HepG2 (cell line): ENCODE measurements at regions of chr16 and their contacts with region 1.

Region 1: DNA sequence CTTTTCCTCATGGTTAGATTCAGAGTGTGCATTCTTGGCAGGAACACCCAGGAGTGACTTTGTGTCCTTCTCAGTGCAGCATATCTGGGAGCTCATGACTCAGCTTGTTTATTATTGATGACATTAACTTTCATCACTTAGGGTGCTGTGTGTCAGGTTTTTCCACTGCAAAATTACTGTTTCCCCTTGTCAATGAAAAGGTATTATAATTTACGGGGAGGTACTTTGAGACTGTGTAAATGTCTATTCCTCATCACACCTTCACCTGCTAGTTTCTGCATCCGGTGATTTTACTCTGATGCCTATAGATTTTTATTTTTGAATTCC is 50.5 kb downstream of the WWP2 start:
- DNase-seq: no peak
- ATAC-seq: peak; percentile 45; the same call in 2 of the 3 replicates
- H3K4me3 ChIP-seq: no peak overlapping the region
- H3K27ac ChIP-seq: peak overlapping the region; percentile 48
- H3K4me1 ChIP-seq: peaks cover 60% of the 10 kb centered on the region
- H3K27me3 ChIP-seq: no peaks in the 10 kb centered on the region
- CTCF ChIP-seq: no peak
- EP300 ChIP-seq: no peak; a peak in 1 of 4 replicates
- POLR2A ChIP-seq: no peak
- RAD21 ChIP-seq: no peak

Region 2: DNA sequence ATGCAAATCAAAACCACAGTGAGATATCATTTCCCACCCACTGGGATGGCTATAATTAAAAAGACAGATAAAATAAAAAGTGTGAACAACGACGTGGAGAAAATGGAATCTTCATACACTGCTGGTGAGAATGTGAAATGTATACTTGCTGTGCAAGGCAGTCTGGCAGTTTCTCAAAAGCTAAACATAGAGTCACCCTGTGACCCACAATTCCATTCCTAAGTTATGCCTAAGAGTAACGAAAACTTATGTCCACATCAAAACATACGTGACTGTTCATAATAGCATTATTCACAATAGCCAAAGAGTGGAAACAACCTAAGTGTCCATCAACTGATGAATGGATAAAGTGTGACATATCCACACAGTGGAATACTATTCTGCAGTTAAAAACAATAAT is 539.6 kb before region 1 on chr16:
- CTCF ChIA-PET with region 1: no interaction called
- POLR2A ChIA-PET with region 1: no interaction called
- in situ Hi-C with region 1: no loop called
- intact Hi-C with region 1: no loop called
- DNase-seq: no peak
- ATAC-seq: no peak
- H3K4me3 ChIP-seq: no peak overlapping the region
- H3K27ac ChIP-seq: no peak overlapping the region
- H3K4me1 ChIP-seq: no peaks in the 10 kb centered on the region
- H3K27me3 ChIP-seq: no peaks in the 10 kb centered on the region
- CTCF ChIP-seq: no peak
- EP300 ChIP-seq: no peak
- POLR2A ChIP-seq: no peak
- RAD21 ChIP-seq: no peak

Region 3: DNA sequence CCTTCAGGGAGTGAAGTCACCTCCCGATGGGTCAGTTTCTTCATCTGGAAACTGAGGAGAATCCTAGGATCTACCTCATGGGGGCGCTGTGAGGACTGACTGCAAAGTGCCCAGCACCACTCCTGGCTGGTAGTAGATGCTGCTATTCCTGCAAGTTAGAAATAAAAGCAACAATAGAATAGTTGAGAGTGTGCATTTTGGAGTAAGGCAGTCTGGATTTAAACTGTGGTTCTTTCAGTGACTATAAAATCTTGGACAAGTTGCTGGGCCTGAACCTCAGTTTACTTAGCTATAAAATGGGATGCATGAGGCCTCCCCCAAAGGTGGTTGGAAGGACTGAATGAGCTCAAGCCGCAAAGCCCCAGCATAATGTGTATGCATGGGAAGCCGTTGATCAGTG is 317.7 kb before region 1 on chr16:
- CTCF ChIA-PET with region 1: no interaction called
- POLR2A ChIA-PET with region 1: no interaction called
- in situ Hi-C with region 1: no loop called
- intact Hi-C with region 1: no loop called
- DNase-seq: peak; percentile 39
- ATAC-seq: peak; percentile 42
- H3K4me3 ChIP-seq: no peak overlapping the region
- H3K27ac ChIP-seq: no peak overlapping the region
- H3K4me1 ChIP-seq: peaks cover 67% of the 10 kb centered on the region
- H3K27me3 ChIP-seq: no peaks in the 10 kb centered on the region
- CTCF ChIP-seq: peak; percentile 53
- EP300 ChIP-seq: no peak
- POLR2A ChIP-seq: no peak
- RAD21 ChIP-seq: peak; percentile 54

Region 4: DNA sequence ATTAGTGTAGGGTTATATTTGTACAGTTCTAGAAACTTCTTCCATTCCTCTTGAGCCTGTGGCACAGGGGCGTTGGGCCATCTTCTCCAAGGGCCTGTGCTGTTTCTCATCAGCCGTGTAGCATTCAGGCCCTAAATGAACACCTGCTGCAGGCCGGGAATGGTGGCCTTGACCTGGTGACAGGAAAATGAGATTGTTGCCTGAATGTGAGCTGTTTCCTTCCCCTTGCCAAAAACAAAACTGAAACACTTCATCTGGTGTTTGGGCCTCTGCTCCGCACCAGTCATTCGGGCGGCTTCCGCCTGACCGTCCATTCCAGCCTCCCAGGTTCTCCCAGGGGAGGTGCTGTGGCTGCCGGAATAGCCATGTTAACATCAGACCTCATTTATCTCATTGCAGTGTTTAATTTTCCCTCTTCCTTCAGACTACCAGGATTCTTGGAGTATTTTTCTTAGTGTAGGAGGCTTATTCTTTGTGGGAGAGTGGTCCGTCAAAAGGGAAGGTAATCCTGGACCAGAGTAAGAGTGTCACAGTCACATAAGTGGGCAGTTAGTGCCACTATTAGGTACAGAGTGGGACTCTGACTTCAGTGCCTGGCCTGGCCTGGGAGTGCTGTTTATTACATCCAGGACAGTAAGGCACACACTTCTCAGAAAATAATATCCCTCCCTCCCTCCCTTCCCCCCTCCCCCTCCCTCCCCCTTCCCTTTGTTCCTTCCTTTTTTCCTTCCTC is 11.3 kb after region 1 on chr16:
- CTCF ChIA-PET with region 1: no interaction called
- POLR2A ChIA-PET with region 1: interaction called, 16 read pairs
- in situ Hi-C with region 1: no loop called
- intact Hi-C with region 1: no loop called
- DNase-seq: no peak
- ATAC-seq: peak; percentile 47
- H3K4me3 ChIP-seq: no peak overlapping the region
- H3K27ac ChIP-seq: peak overlapping the region; percentile 51
- H3K4me1 ChIP-seq: peaks cover 88% of the 10 kb centered on the region
- H3K27me3 ChIP-seq: no peaks in the 10 kb centered on the region
- CTCF ChIP-seq: 0 out of 2 replicates have a peak, but pooled peaks have one; percentile 10
- EP300 ChIP-seq: peak in 1 of 2 experiments; percentile 63; a peak in 2 of 4 replicates
- POLR2A ChIP-seq: no peak
- RAD21 ChIP-seq: no peak

Region 5: GRCh38 chr16:69839798-69840409 is 27.3 kb after region 1 on chr16:
- CTCF ChIA-PET with region 1: no interaction called
- POLR2A ChIA-PET with region 1: interaction called, 25 read pairs
- in situ Hi-C with region 1: no loop called
- intact Hi-C with region 1: no loop called
- DNase-seq: peak; percentile 81
- ATAC-seq: peak; percentile 81
- H3K4me3 ChIP-seq: peak overlapping the region in 2 of 3 experiments; percentile 2 to 9; a peak in 2 of 6 replicates
- H3K27ac ChIP-seq: peak overlapping the region; percentile 82
- H3K4me1 ChIP-seq: peaks cover 69% of the 10 kb centered on the region
- H3K27me3 ChIP-seq: no peaks in the 10 kb centered on the region
- CTCF ChIP-seq: no peak
- EP300 ChIP-seq: peak in 1 of 2 experiments; percentile 60; a peak in 2 of 4 replicates
- POLR2A ChIP-seq: no peak
- RAD21 ChIP-seq: no peak

Region 6: GRCh38 chr16:70251629-70252354 is 439.1 kb after region 1 on chr16 and contains the start of gene EXOSC6:
- CTCF ChIA-PET with region 1: no interaction called
- POLR2A ChIA-PET with region 1: no interaction called
- in situ Hi-C with region 1: no loop called
- intact Hi-C with region 1: no loop called
- DNase-seq: peak; percentile 92
- ATAC-seq: peak; percentile 88
- H3K4me3 ChIP-seq: peak within 1 kb of the TSS; percentile 69 to 83 (median 81)
- H3K27ac ChIP-seq: peak within 1 kb of the TSS; percentile 90
- H3K4me1 ChIP-seq: peaks cover 49% of the 10 kb centered on the region
- H3K27me3 ChIP-seq: no peaks in the 10 kb centered on the region
- CTCF ChIP-seq: peak; percentile 99
- EP300 ChIP-seq: peak; percentile 55 to 59
- POLR2A ChIP-seq: peak; percentile 93 to 95
- RAD21 ChIP-seq: peak; percentile 69
- total RNA-seq, gene EXOSC6: 37.3 and 39.9 TPM in 2 replicates